ENCODE measurements at regions of chr7 and their contacts with region 1.

Region 1: GRCh38 chr7:149861446-149862045 is 12.2 kb upstream of the ATP6V0E2 start:
- DNase-seq: no peak
- ATAC-seq: no peak
- H3K4me3 ChIP-seq: no peak overlapping the region
- H3K4me3 Mint-ChIP-seq: peak overlapping the region in 1 of 10 donors; percentile 6
- H3K27ac ChIP-seq: no peak overlapping the region
- H3K27ac Mint-ChIP-seq: peak overlapping the region in 6 of 9 donors; percentile 10 to 83 (median 50)
- H3K4me1 ChIP-seq: peaks cover 29 to 69% of the 10 kb centered on the region in 2 donors
- H3K4me1 Mint-ChIP-seq: peaks cover 36 to 93% (median 83%) of the 10 kb centered on the region in 7 donors
- H3K27me3 ChIP-seq: no peaks in the 10 kb centered on the region
- H3K27me3 Mint-ChIP-seq: no peaks in the 10 kb centered on the region

Region 2: GRCh38 chr7:149714050-149714909 is 147.3 kb before region 1 on chr7:
- CTCF ChIA-PET with region 1: no interaction called
- POLR2A ChIA-PET with region 1: no interaction called
- intact Hi-C with region 1: loop called in 1 of 2 experiments (anchors 10 kb)
- DNase-seq: peak; percentile 68 to 89 (median 84)
- ATAC-seq: peak; percentile 99
- H3K4me3 ChIP-seq: peak overlapping the region; percentile 75
- H3K4me3 Mint-ChIP-seq: peak overlapping the region; percentile 71 to 87 (median 80)
- H3K27ac ChIP-seq: peak overlapping the region; percentile 72
- H3K27ac Mint-ChIP-seq: peak overlapping the region in 4 of 9 donors; percentile 5 to 72 (median 54)
- H3K4me1 ChIP-seq: peaks cover 10 to 13% of the 10 kb centered on the region in 2 donors
- H3K4me1 Mint-ChIP-seq: peaks cover 12 to 26% (median 19%) of the 10 kb centered on the region in 7 donors
- H3K27me3 ChIP-seq: no peaks in the 10 kb centered on the region
- H3K27me3 Mint-ChIP-seq: peaks cover 0 to 4% (median 0%) of the 10 kb centered on the region in 5 donors

Region 3: GRCh38 chr7:149838224-149838947 is 23.2 kb before region 1 on chr7 and contains the start of gene ZNF862:
- CTCF ChIA-PET with region 1: interaction called, 3 read pairs
- POLR2A ChIA-PET with region 1: interaction called, 81 read pairs
- intact Hi-C with region 1: loop called (anchors 1 to 2 kb)
- DNase-seq: peak; percentile 84 to 96 (median 94)
- ATAC-seq: peak; percentile 99
- H3K4me3 ChIP-seq: peak within 1 kb of the TSS; percentile 67
- H3K4me3 Mint-ChIP-seq: peak within 1 kb of the TSS; percentile 85 to 97 (median 91)
- H3K27ac ChIP-seq: peak within 1 kb of the TSS; percentile 79
- H3K27ac Mint-ChIP-seq: peak within 1 kb of the TSS; percentile 77 to 96 (median 88)
- H3K4me1 ChIP-seq: peaks cover 12 to 22% of the 10 kb centered on the region in 2 donors
- H3K4me1 Mint-ChIP-seq: peaks cover 25 to 52% (median 48%) of the 10 kb centered on the region in 7 donors
- H3K27me3 ChIP-seq: no peaks in the 10 kb centered on the region
- H3K27me3 Mint-ChIP-seq: peaks cover 0 to 15% (median 3%) of the 10 kb centered on the region in 5 donors
- total RNA-seq, gene ZNF862: 36.9 to 112 (median 41.8) TPM

Region 4: GRCh38 chr7:149846436-149847046 is 15.0 kb before region 1 on chr7:
- CTCF ChIA-PET with region 1: interaction called, 3 read pairs
- POLR2A ChIA-PET with region 1: interaction called, 19 read pairs
- intact Hi-C with region 1: no loop called
- DNase-seq: no peak
- ATAC-seq: no peak
- H3K4me3 ChIP-seq: no peak overlapping the region
- H3K4me3 Mint-ChIP-seq: peak overlapping the region in 2 of 10 donors; percentile 11 to 27
- H3K27ac ChIP-seq: no peak overlapping the region
- H3K27ac Mint-ChIP-seq: peak overlapping the region in 8 of 9 donors; percentile 11 to 81 (median 71)
- H3K4me1 ChIP-seq: peaks cover 0 to 49% of the 10 kb centered on the region in 2 donors
- H3K4me1 Mint-ChIP-seq: peaks cover 16 to 83% (median 68%) of the 10 kb centered on the region in 7 donors
- H3K27me3 ChIP-seq: no peaks in the 10 kb centered on the region
- H3K27me3 Mint-ChIP-seq: no peaks in the 10 kb centered on the region

Region 5: DNA sequence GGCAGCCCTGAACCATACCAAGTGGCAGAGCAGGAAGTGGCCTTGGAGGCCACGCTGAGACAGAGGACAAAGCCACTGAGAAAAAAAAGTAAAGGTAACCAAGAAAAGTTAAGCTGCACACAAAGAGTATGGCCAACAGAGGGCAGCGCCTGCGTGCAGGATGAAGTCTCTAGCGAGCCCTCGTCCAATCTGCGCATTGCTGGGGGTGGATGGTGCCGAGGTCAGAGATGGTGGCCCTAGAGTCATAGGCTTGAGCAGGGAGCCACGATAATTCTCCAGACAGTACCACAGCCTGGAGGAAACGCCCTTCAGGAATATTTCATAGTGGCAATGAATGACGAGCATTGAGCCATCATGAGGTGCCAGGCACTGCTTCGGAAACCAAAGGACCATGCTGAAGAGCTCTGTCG is 21.9 kb after region 1 on chr7:
- CTCF ChIA-PET with region 1: interaction called, 6 read pairs
- POLR2A ChIA-PET with region 1: interaction called, 7 read pairs
- intact Hi-C with region 1: loop called in 1 of 2 experiments (anchors 1 kb)
- DNase-seq: peak in 4 of 9 donors; percentile 58 to 63 (median 60)
- ATAC-seq: peak; percentile 81
- H3K4me3 ChIP-seq: no peak overlapping the region
- H3K4me3 Mint-ChIP-seq: peak overlapping the region in 1 of 10 donors; percentile 38
- H3K27ac ChIP-seq: no peak overlapping the region
- H3K27ac Mint-ChIP-seq: peak overlapping the region in 6 of 9 donors; percentile 11 to 80 (median 62)
- H3K4me1 ChIP-seq: peaks cover 0 to 7% of the 10 kb centered on the region in 2 donors
- H3K4me1 Mint-ChIP-seq: peaks cover 5 to 26% (median 19%) of the 10 kb centered on the region in 7 donors
- H3K27me3 ChIP-seq: no peaks in the 10 kb centered on the region
- H3K27me3 Mint-ChIP-seq: no peaks in the 10 kb centered on the region